ENCODE measurements at regions of chr16 and their contacts with region 1.

Region 1: GRCh38 chr16:30571695-30572600 is at the start of gene ZNF688:
- DNase-seq: peak; percentile 91 to 97
- ATAC-seq: peak; percentile 82 to 93 (median 86)
- H3K4me3 ChIP-seq: peak within 1 kb of the TSS; percentile 74
- H3K4me3 Mint-ChIP-seq: peak within 1 kb of the TSS; percentile 93
- H3K27ac ChIP-seq: peak within 1 kb of the TSS; percentile 97
- H3K27ac Mint-ChIP-seq: peak within 1 kb of the TSS; percentile 92 to 95
- H3K4me1 ChIP-seq: peaks cover 42% of the 10 kb centered on the region
- H3K4me1 Mint-ChIP-seq: peaks cover 19 to 29% of the 10 kb centered on the region in 2 donors
- H3K27me3 ChIP-seq: no peaks in the 10 kb centered on the region
- H3K27me3 Mint-ChIP-seq: no peaks in the 10 kb centered on the region
- CTCF ChIP-seq: no peak
- total RNA-seq, gene ZNF688: 10.1 to 16.9 (median 16.5) TPM

Region 2: DNA sequence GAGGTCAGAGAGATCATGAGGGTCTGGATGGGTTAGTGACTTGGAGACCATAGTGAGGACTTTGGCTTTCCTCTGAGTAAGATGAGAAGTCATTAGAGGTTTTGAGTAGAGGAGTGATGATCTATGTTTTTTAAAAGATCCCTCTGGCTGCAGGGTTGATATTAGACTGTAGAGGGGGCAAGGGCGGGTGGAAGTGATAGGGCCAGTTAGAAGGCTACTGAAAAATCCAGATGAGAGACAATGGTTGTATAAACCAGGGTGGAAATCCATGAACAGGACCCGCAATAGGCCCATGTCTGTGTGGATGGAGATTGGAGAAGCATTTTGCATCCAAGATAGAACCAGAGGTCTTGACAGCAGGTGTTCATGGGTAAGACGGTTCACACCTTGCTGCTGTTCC is 89.6 kb before region 1 on chr16:
- intact Hi-C with region 1: no loop called
- DNase-seq: peak in 1 of 2 donors; percentile 46
- ATAC-seq: peak; percentile 48 to 80 (median 73)
- H3K4me3 ChIP-seq: no peak overlapping the region
- H3K4me3 Mint-ChIP-seq: peak overlapping the region; percentile 29
- H3K27ac ChIP-seq: no peak overlapping the region
- H3K27ac Mint-ChIP-seq: peak overlapping the region; percentile 86 to 95
- H3K4me1 ChIP-seq: peaks cover 72% of the 10 kb centered on the region
- H3K4me1 Mint-ChIP-seq: peaks cover 35 to 66% of the 10 kb centered on the region in 2 donors
- H3K27me3 ChIP-seq: no peaks in the 10 kb centered on the region
- H3K27me3 Mint-ChIP-seq: no peaks in the 10 kb centered on the region
- CTCF ChIP-seq: peak; percentile 28

Region 3: DNA sequence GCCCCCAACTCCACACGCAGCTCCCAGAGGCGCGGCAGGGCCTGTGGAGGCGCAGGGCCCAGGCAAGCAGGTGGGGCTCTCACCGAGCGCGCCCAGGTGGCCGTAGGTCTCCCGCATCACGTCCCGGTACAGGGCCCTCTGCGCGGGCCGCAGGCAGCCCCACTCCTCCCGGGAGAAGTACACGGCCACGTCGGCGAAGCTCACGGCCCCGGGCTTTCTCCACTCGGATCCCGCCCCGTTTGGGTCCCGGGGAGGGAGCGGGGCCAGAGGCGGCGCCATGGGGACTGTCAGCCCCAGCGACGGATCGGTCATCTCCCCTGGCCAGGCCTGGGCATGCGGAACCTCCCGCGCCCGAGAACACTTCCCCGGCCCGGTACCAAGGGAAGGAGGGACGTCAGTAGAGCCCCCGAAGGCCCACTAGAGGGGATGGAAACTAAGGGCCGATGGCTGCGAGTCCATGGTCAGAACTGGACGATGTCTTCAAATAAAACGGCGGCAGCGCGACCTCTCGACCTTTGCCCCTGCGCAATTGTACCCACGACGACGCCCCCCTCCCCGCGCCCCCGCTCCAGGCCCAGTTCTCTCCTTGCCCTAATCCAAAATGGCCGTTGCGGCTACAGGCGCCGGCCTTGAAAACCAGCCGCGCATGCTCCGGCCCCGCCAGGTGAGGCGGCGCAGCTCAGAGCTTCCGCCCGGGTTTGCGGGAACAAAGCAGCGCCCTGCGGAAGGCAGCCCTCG is 37.4 kb before region 1 on chr16 and contains the start of gene ZNF747:
- intact Hi-C with region 1: loop called (anchors 1 kb)
- DNase-seq: peak; percentile 86 to 96
- ATAC-seq: peak; percentile 86 to 93 (median 89)
- H3K4me3 ChIP-seq: peak within 1 kb of the TSS; percentile 87
- H3K4me3 Mint-ChIP-seq: peak within 1 kb of the TSS; percentile 96
- H3K27ac ChIP-seq: peak within 1 kb of the TSS; percentile 94
- H3K27ac Mint-ChIP-seq: peak within 1 kb of the TSS; percentile 83 to 95
- H3K4me1 ChIP-seq: peaks cover 38% of the 10 kb centered on the region
- H3K4me1 Mint-ChIP-seq: peaks cover 22 to 30% of the 10 kb centered on the region in 2 donors
- H3K27me3 ChIP-seq: no peaks in the 10 kb centered on the region
- H3K27me3 Mint-ChIP-seq: no peaks in the 10 kb centered on the region
- CTCF ChIP-seq: no peak
- total RNA-seq, gene ZNF747: 5.0 to 8.6 (median 6.3) TPM

Region 4: DNA sequence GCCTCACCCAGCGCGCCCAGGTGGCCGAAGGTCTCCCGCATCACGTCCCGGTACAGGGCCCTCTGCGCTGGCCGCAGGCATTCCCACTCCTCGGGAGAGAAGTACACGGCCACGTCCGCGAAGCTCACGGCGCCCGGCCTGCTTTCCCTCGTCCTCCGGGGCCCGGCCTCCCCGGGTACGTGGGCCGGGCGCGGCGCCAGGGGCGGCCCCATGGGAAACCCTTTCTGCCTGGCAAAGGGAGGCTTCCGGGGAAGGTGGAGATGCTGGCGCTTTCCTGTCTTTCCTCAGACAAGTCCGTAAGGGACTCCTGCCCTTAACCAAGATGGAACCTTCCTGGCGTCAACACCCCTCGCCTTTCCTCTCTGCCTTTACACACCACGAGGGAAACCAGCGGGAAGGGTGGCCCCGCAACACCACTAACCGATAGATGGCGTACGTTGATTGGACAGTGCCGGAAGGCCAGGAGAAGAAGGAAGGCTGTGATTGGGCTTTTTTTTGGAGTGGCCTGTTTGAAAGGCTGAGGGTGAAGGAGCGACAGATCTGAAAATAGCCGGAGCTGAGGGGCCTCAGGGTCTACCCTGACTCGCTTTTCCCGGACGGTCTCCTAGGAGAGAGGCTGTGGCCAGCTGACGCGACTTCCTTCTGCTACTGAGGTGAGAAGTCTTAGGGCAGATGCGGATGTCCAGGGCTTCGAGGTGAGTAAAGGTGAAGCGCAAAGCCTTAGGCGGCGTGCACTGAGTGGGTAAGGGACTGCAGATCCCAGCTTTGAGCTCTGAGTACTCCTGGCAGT is 13.6 kb after region 1 on chr16 and contains the start of gene ZNF785:
- intact Hi-C with region 1: loop called (anchors 1 kb)
- DNase-seq: peak; percentile 85 to 97
- ATAC-seq: peak; percentile 98 to 99 (median 99)
- H3K4me3 ChIP-seq: peak within 1 kb of the TSS; percentile 58
- H3K4me3 Mint-ChIP-seq: peak within 1 kb of the TSS; percentile 90
- H3K27ac ChIP-seq: peak within 1 kb of the TSS; percentile 26
- H3K27ac Mint-ChIP-seq: peak within 1 kb of the TSS; percentile 86 to 87
- H3K4me1 ChIP-seq: peaks cover 14% of the 10 kb centered on the region
- H3K4me1 Mint-ChIP-seq: peaks cover 9 to 14% of the 10 kb centered on the region in 2 donors
- H3K27me3 ChIP-seq: no peaks in the 10 kb centered on the region
- H3K27me3 Mint-ChIP-seq: no peaks in the 10 kb centered on the region
- CTCF ChIP-seq: no peak
- total RNA-seq, gene ZNF785: 7.5 to 15.2 (median 10.4) TPM

Region 5: DNA sequence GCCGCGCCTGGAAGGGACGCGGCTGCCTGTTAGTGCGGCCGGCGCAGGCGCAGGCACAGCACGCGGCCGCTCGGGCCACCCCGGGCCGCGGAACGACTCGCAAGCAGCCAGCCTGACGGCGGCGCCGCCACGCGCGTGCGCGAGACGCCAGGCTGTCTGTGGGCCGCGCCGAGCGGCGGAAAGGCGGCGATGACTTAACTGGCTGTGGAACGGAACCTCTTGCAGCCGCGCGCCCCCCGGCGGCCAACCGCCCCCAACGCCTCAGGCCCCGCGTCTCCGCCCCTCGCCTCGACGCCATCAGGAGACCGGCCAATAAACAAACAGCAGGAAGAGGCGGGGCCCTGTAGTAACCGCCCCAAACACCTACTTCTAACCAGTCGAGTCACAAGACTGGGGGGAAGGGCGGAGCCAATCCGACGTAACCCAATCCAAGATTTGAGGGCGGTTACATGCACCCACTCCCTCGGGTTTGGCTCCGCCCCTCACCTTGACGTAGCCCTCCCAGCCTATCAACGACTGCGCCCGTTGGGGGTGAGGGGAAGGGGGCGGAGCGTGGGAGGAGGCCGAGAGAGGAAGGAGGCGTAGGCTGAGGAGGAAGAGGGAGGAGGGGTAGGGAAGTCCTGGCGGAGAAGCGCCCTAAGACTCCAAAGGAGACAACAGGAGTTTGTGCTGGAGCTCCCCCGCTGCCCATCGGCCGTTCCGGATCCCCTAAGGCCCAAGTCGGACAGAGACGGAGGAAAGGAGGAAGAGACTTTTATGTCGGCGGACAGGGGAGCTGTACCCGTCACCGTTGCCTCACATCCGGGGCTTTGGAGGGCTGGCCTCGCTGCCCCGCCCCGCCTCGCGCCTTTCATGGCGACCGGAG is 86.2 kb after region 1 on chr16 and contains the start of gene FBRS:
- intact Hi-C with region 1: loop called (anchors 5 kb)
- DNase-seq: peak; percentile 99 to 100
- ATAC-seq: peak; percentile 72 to 86 (median 74)
- H3K4me3 ChIP-seq: peak within 1 kb of the TSS; percentile 97
- H3K4me3 Mint-ChIP-seq: peak within 1 kb of the TSS; percentile 98
- H3K27ac ChIP-seq: peak within 1 kb of the TSS; percentile 99
- H3K27ac Mint-ChIP-seq: peak within 1 kb of the TSS; percentile 98 to 99
- H3K4me1 ChIP-seq: peaks cover 39% of the 10 kb centered on the region
- H3K4me1 Mint-ChIP-seq: peaks cover 38 to 52% of the 10 kb centered on the region in 2 donors
- H3K27me3 ChIP-seq: no peaks in the 10 kb centered on the region
- H3K27me3 Mint-ChIP-seq: no peaks in the 10 kb centered on the region
- CTCF ChIP-seq: peak; percentile 77
- total RNA-seq, gene FBRS: 158 to 182 (median 172) TPM

Measured in natural killer cell (primary cell).